Thyroid gland (tissue), 4 donors: ENCODE measurements at regions of chr16 and their contacts with region 1.

Region 1: DNA sequence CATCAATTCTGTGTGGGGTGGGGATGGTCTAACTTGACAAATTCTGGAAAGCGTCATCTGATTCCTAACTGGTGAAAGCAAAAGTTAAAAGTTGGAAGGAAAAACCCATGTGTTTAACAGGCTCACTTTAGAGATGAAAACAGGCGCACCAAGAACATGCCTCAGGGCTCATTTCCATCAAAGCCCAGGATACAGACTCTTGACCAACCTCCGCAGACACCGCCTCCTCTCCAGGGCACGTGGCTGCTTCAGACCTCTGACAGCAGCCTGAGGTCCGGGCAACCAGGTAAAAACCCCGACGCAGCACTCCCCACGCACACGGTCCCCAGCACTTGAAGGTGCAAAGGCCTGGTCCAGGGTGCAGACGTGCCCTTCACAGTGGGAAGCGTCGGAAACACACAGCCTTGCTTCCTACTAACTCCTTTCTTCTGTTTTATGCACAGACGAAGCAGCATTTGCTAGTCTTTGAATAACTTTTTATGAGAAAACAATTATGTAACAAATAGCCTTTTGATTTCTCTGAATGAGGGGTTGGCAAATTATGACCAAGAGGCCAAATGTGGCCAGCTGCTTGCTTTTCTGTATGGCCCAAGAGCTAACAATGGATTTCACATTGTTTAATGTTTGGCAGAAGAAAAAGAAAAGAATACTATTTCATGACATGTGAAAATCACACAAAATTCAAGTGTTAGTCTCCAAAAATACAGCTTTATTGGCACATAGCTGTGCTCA is 44.2 kb upstream of the TRAP1 start:
- DNase-seq: no peak
- H3K4me3 ChIP-seq: no peak overlapping the region
- H3K27ac ChIP-seq: no peak overlapping the region
- H3K4me1 ChIP-seq: no peaks in the 10 kb centered on the region
- H3K27me3 ChIP-seq: no peaks in the 10 kb centered on the region
- CTCF ChIP-seq: no peak
- POLR2A ChIP-seq: no peak

Region 2: DNA sequence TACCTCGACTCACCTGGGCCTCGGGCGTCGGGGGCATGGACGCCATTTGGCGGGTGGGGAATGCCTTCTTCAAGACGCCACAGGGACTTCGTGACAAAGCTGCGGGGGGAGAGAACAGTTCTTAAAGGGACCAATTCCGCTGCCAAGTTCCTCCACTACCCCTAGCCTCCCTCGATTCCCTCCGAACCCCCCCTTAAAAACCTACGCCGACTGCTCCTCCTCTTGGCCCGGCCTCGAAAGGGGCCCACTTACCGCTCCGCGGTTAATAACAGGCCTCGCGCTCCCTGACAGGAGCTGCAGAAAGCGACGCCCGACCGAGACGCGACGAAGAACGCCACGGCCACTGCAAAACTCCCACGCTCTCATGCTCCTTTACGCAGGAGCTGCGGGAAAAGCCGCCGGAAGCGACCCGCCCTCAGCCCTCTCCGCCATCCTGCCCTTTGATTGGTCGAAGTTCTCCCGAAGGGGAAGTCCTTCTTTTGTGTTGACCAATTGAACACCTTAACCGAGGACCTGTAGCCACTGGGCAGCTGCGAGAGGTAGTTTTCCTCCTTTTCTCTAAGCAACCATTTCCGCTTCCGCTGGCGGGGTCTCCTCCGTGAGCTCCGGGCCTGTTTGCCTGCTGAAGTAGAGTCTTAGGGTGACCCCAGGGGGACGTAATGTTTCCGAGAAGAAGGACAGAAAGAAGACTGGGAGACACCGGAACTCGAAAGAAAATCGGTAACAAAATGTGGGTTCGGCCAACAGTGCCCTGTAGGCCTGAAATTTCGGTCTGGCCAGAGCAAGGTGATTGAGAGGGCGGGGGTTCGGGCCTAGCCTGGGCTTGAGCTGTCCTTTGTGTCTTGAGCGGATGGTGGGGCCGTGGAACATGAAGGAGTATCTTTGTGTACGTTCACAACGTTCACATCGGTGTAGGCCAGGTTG is 318.2 kb before region 1 on chr16 and contains the starts of genes NAA60 and ZNF597:
- intact Hi-C with region 1: no loop called
- DNase-seq: peak; percentile 83 to 84
- H3K4me3 ChIP-seq: peak within 1 kb of the TSS; percentile 6 to 51 (median 12)
- H3K27ac ChIP-seq: peak within 1 kb of the TSS in 1 of 3 donors; percentile 61
- H3K4me1 ChIP-seq: peaks cover 6 to 7% of the 10 kb centered on the region in 2 donors
- H3K27me3 ChIP-seq: no peaks in the 10 kb centered on the region
- CTCF ChIP-seq: no peak
- POLR2A ChIP-seq: peak in 1 of 2 donors; percentile 48
- total RNA-seq, gene NAA60: 22.7 to 42.2 (median 31.0) TPM
- total RNA-seq, gene ZNF597: 2.7 to 6.8 (median 4.3) TPM

Region 3: GRCh38 chr16:3696425-3697218 is 64.9 kb before region 1 on chr16:
- intact Hi-C with region 1: no loop called
- DNase-seq: no peak
- H3K4me3 ChIP-seq: no peak overlapping the region
- H3K27ac ChIP-seq: no peak overlapping the region
- H3K4me1 ChIP-seq: no peaks in the 10 kb centered on the region
- H3K27me3 ChIP-seq: no peaks in the 10 kb centered on the region
- CTCF ChIP-seq: no peak
- POLR2A ChIP-seq: no peak

Region 4: GRCh38 chr16:3879887-3880564 is 118.5 kb after region 1 on chr16:
- intact Hi-C with region 1: loop called (anchors 10 kb)
- DNase-seq: peak; percentile 79
- H3K4me3 ChIP-seq: peak overlapping the region; percentile 21 to 88 (median 78)
- H3K27ac ChIP-seq: peak overlapping the region in 2 of 3 donors; percentile 76 to 80
- H3K4me1 ChIP-seq: peaks cover 24 to 32% of the 10 kb centered on the region in 2 donors
- H3K27me3 ChIP-seq: no peaks in the 10 kb centered on the region
- CTCF ChIP-seq: peak in 3 of 6 experiments; percentile 5 to 53 (median 32)
- POLR2A ChIP-seq: no peak